Activated CD4-positive, alpha-beta T cell treated with anti-CD3 and anti-CD28 coated beads, Interleukin-2, amount 10 ng/mL, durations not matched to agents 24 days and 14 days (primary cell): ENCODE measurements at regions of chr21 and their contacts with region 1.

Region 1: GRCh38 chr21:30733026-30733425 is 14.0 kb downstream of the KRTAP21-2 start:
- DNase-seq: no peak
- H3K4me3 Mint-ChIP-seq: no peak overlapping the region
- H3K27ac Mint-ChIP-seq: no peak overlapping the region
- H3K4me1 Mint-ChIP-seq: no peaks in the 10 kb centered on the region
- H3K27me3 Mint-ChIP-seq: peaks cover 25% of the 10 kb centered on the region

Region 2: GRCh38 chr21:30340441-30341241 is 392.4 kb before region 1 on chr21:
- intact Hi-C with region 1: loop called (anchors 5 kb)
- DNase-seq: peak; percentile 69
- H3K4me3 Mint-ChIP-seq: no peak overlapping the region
- H3K27ac Mint-ChIP-seq: no peak overlapping the region
- H3K4me1 Mint-ChIP-seq: no peaks in the 10 kb centered on the region
- H3K27me3 Mint-ChIP-seq: no peaks in the 10 kb centered on the region

Region 3: DNA sequence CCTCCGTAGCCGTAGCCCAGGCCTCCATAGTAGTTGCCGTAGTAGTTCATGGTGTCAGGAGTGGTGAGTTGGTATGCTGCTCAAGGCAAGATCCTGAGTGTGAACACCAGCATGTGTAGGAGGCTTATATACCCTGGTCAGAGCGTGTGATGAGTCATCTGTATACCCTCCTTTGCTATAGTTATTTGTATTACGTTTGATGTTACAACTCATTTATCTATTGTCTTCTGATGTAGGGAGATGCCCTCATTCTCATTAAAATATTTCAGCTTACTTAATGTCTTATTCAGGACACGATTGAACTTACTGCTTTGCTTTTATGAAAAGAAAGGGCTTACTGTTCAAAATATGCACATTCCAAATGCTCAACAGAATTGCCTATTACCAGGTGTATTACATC is 231.0 kb before region 1 on chr21 and contains the start of gene KRTAP19-5:
- intact Hi-C with region 1: loop called (anchors 1 kb)
- DNase-seq: no peak
- H3K4me3 Mint-ChIP-seq: no peak within 1 kb of the TSS
- H3K27ac Mint-ChIP-seq: no peak within 1 kb of the TSS
- H3K4me1 Mint-ChIP-seq: no peaks in the 10 kb centered on the region
- H3K27me3 Mint-ChIP-seq: no peaks in the 10 kb centered on the region
- total RNA-seq, gene KRTAP19-5: not detected in 2 replicates

Region 4: GRCh38 chr21:30695956-30696355 is 37.1 kb before region 1 on chr21:
- intact Hi-C with region 1: no loop called
- DNase-seq: no peak
- H3K4me3 Mint-ChIP-seq: no peak overlapping the region
- H3K27ac Mint-ChIP-seq: no peak overlapping the region
- H3K4me1 Mint-ChIP-seq: no peaks in the 10 kb centered on the region
- H3K27me3 Mint-ChIP-seq: no peaks in the 10 kb centered on the region

Region 5: GRCh38 chr21:30747159-30747558 is 14.1 kb after region 1 on chr21 and contains the start of gene KRTAP21-2:
- intact Hi-C with region 1: no loop called
- DNase-seq: no peak
- H3K4me3 Mint-ChIP-seq: no peak within 1 kb of the TSS
- H3K27ac Mint-ChIP-seq: no peak within 1 kb of the TSS
- H3K4me1 Mint-ChIP-seq: no peaks in the 10 kb centered on the region
- H3K27me3 Mint-ChIP-seq: peaks cover 9% of the 10 kb centered on the region
- total RNA-seq, gene KRTAP21-2: not detected in 2 replicates